ENCODE measurements at regions of chr12 and their contacts with region 1.

Region 1: GRCh38 chr12:111066744-111067437 is 146.5 kb upstream of the MYL2 start:
- DNase-seq: no peak
- ATAC-seq: no peak
- H3K4me3 Mint-ChIP-seq: peak overlapping the region in 2 of 10 donors; percentile 12 to 49
- H3K27ac Mint-ChIP-seq: peak overlapping the region in 5 of 10 donors; percentile 25 to 88 (median 77)
- H3K4me1 Mint-ChIP-seq: peaks cover 7 to 35% (median 17%) of the 10 kb centered on the region in 4 donors
- H3K27me3 Mint-ChIP-seq: peaks cover 0 to 2% (median 0%) of the 10 kb centered on the region in 5 donors

Region 2: GRCh38 chr12:111056618-111057521 is 10.0 kb before region 1 on chr12:
- POLR2A ChIA-PET with region 1: interaction called, 18 read pairs
- DNase-seq: peak in 9 of 10 donors; percentile 18 to 86 (median 61)
- ATAC-seq: peak; percentile 87 to 88
- H3K4me3 Mint-ChIP-seq: peak overlapping the region; percentile 13 to 74 (median 66)
- H3K27ac Mint-ChIP-seq: peak overlapping the region; percentile 90 to 99 (median 96)
- H3K4me1 Mint-ChIP-seq: peaks cover 22 to 38% (median 35%) of the 10 kb centered on the region in 4 donors
- H3K27me3 Mint-ChIP-seq: peaks cover 0 to 2% (median 0%) of the 10 kb centered on the region in 5 donors

Region 3: GRCh38 chr12:111102062-111102739 is 35.3 kb after region 1 on chr12:
- POLR2A ChIA-PET with region 1: no interaction called
- DNase-seq: no peak
- ATAC-seq: no peak
- H3K4me3 Mint-ChIP-seq: no peak overlapping the region
- H3K27ac Mint-ChIP-seq: peak overlapping the region in 3 of 10 donors; percentile 18 to 79 (median 19)
- H3K4me1 Mint-ChIP-seq: peaks cover 8 to 23% (median 15%) of the 10 kb centered on the region in 4 donors
- H3K27me3 Mint-ChIP-seq: peaks cover 0 to 4% (median 0%) of the 10 kb centered on the region in 5 donors

Region 4: GRCh38 chr12:111256629-111257434 is 189.9 kb after region 1 on chr12:
- POLR2A ChIA-PET with region 1: no interaction called
- DNase-seq: no peak
- ATAC-seq: no peak
- H3K4me3 Mint-ChIP-seq: no peak overlapping the region
- H3K27ac Mint-ChIP-seq: peak overlapping the region in 3 of 10 donors; percentile 5 to 41 (median 14)
- H3K4me1 Mint-ChIP-seq: peaks cover 0 to 7% (median 4%) of the 10 kb centered on the region in 4 donors
- H3K27me3 Mint-ChIP-seq: peaks cover 0 to 6% (median 3%) of the 10 kb centered on the region in 5 donors

Measured in naive thymus-derived CD8-positive, alpha-beta T cell (primary cell).